ENCODE measurements at regions of chr7 and their contacts with region 1.

Region 1: DNA sequence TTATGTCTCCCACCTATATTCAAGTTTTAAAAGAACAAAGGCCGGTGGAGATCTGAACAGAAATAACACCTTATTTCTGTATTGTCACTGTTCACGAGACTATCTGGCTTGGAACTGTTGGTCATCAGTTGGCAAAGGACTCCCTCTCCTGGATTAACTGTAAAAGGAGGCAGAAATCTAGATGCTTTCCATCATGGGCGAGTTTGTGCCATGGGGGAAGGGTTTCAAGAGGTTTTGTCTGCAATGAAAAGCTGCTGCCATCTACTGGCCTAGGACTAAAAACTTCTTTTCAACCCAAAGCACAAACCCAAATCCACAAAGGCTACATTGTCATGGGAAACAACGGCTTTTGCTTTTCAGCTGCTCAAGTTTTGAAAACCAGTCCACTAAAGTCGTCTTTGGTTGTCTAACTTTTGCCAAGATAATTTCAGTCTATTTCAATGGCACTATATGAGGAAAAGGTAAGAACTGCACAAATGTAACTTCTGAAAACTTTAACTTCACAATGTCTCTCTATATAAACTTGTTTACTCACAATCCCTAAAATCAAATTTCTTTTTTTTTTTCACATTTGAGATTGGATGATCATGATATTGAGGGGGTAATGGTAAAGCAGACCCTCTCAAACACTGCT is 196.8 kb downstream of the SKAP2 start:
- DNase-seq: peak; percentile 23 to 84 (median 44)
- ATAC-seq: peak; percentile 87
- H3K4me3 ChIP-seq: no peak overlapping the region
- H3K27ac ChIP-seq: no peak overlapping the region
- H3K4me1 ChIP-seq: no peaks in the 10 kb centered on the region
- H3K27me3 ChIP-seq: peaks cover 0 to 9% of the 10 kb centered on the region in 2 experiments; a peak in 2 of 5 replicates
- CTCF ChIP-seq: peak; percentile 87 to 98 (median 90)
- EP300 ChIP-seq: no peak
- POLR2A ChIP-seq: no peak
- RAD21 ChIP-seq: peak; percentile 95 to 96

Region 2: GRCh38 chr7:25996006-25996408 is 671.6 kb before region 1 on chr7:
- CTCF ChIA-PET with region 1: no interaction called
- POLR2A ChIA-PET with region 1: no interaction called
- in situ Hi-C with region 1: loop called (anchors 10 kb)
- intact Hi-C with region 1: no loop called
- DNase-seq: no peak
- ATAC-seq: peak; percentile 36; the same call in 1 of the 3 replicates
- H3K4me3 ChIP-seq: no peak overlapping the region
- H3K27ac ChIP-seq: no peak overlapping the region
- H3K4me1 ChIP-seq: no peaks in the 10 kb centered on the region
- H3K27me3 ChIP-seq: peaks cover 8 to 17% of the 10 kb centered on the region in 2 experiments; a peak in 3 of 5 replicates
- CTCF ChIP-seq: peak; percentile 20 to 37 (median 32); a peak in 2 of 6 replicates
- EP300 ChIP-seq: no peak
- POLR2A ChIP-seq: no peak
- RAD21 ChIP-seq: peak in 1 of 2 experiments; percentile 48; a peak in 3 of 4 replicates

Region 3: GRCh38 chr7:26078437-26079336 is 588.9 kb before region 1 on chr7:
- CTCF ChIA-PET with region 1: no interaction called
- POLR2A ChIA-PET with region 1: no interaction called
- in situ Hi-C with region 1: loop called (anchors 25 kb)
- intact Hi-C with region 1: loop called (anchors 10 kb)
- DNase-seq: peak; percentile 16 to 69 (median 38)
- ATAC-seq: peak; percentile 93
- H3K4me3 ChIP-seq: no peak overlapping the region
- H3K27ac ChIP-seq: no peak overlapping the region
- H3K4me1 ChIP-seq: peaks cover 0 to 4% of the 10 kb centered on the region in 2 experiments; a peak in 3 of 5 replicates
- H3K27me3 ChIP-seq: peaks cover 9 to 22% of the 10 kb centered on the region in 2 experiments
- CTCF ChIP-seq: peak; percentile 62 to 69 (median 67)
- EP300 ChIP-seq: no peak
- POLR2A ChIP-seq: no peak
- RAD21 ChIP-seq: peak; percentile 71 to 78

Region 4: GRCh38 chr7:26291699-26292538 is 375.7 kb before region 1 on chr7 and contains the start of gene SNX10:
- CTCF ChIA-PET with region 1: no interaction called
- POLR2A ChIA-PET with region 1: no interaction called
- in situ Hi-C with region 1: no loop called
- intact Hi-C with region 1: loop called (anchors 5 kb)
- DNase-seq: peak; percentile 73 to 89 (median 78)
- ATAC-seq: peak; percentile 98
- H3K4me3 ChIP-seq: peak within 1 kb of the TSS; percentile 85
- H3K27ac ChIP-seq: peak within 1 kb of the TSS; percentile 71
- H3K4me1 ChIP-seq: peaks cover 11 to 19% of the 10 kb centered on the region in 2 experiments
- H3K27me3 ChIP-seq: no peaks in the 10 kb centered on the region
- CTCF ChIP-seq: peak; percentile 50 to 86 (median 79)
- EP300 ChIP-seq: no peak
- POLR2A ChIP-seq: peak; percentile 61; the same call in 1 of the 2 replicates
- RAD21 ChIP-seq: peak; percentile 61 to 76
- polyA plus RNA-seq, gene SNX10: 10.9 to 12.4 TPM

Region 5: GRCh38 chr7:26365077-26365900 is 302.3 kb before region 1 on chr7:
- CTCF ChIA-PET with region 1: interaction called, 78 read pairs
- POLR2A ChIA-PET with region 1: interaction called, 5 read pairs
- in situ Hi-C with region 1: loop called (anchors 5 kb)
- intact Hi-C with region 1: loop called (anchors 1 kb)
- DNase-seq: peak; percentile 18 to 78 (median 30)
- ATAC-seq: peak; percentile 86
- H3K4me3 ChIP-seq: no peak overlapping the region
- H3K27ac ChIP-seq: no peak overlapping the region
- H3K4me1 ChIP-seq: no peaks in the 10 kb centered on the region; a peak in 1 of 5 replicates
- H3K27me3 ChIP-seq: no peaks in the 10 kb centered on the region
- CTCF ChIP-seq: peak; percentile 70 to 90 (median 71); a peak in 5 of 6 replicates
- EP300 ChIP-seq: no peak
- POLR2A ChIP-seq: no peak
- RAD21 ChIP-seq: peak; percentile 97 to 98

Region 6: GRCh38 chr7:26500749-26501352 is 166.8 kb before region 1 on chr7:
- CTCF ChIA-PET with region 1: no interaction called
- POLR2A ChIA-PET with region 1: no interaction called
- in situ Hi-C with region 1: no loop called
- intact Hi-C with region 1: loop called (anchors 2 kb)
- DNase-seq: peak in 2 of 4 experiments; percentile 39 to 55
- ATAC-seq: peak; percentile 79
- H3K4me3 ChIP-seq: no peak overlapping the region
- H3K27ac ChIP-seq: no peak overlapping the region
- H3K4me1 ChIP-seq: peaks cover 3 to 8% of the 10 kb centered on the region in 2 experiments; a peak in 3 of 5 replicates
- H3K27me3 ChIP-seq: peaks cover 13 to 16% of the 10 kb centered on the region in 2 experiments; a peak in 4 of 5 replicates
- CTCF ChIP-seq: peak; percentile 39 to 83 (median 61); a peak in 5 of 6 replicates
- EP300 ChIP-seq: no peak
- POLR2A ChIP-seq: no peak
- RAD21 ChIP-seq: peak; percentile 86 to 89

Measured in K562 (cell line).